ENCODE measurements at regions of chr7 and their contacts with region 1.

Region 1: DNA sequence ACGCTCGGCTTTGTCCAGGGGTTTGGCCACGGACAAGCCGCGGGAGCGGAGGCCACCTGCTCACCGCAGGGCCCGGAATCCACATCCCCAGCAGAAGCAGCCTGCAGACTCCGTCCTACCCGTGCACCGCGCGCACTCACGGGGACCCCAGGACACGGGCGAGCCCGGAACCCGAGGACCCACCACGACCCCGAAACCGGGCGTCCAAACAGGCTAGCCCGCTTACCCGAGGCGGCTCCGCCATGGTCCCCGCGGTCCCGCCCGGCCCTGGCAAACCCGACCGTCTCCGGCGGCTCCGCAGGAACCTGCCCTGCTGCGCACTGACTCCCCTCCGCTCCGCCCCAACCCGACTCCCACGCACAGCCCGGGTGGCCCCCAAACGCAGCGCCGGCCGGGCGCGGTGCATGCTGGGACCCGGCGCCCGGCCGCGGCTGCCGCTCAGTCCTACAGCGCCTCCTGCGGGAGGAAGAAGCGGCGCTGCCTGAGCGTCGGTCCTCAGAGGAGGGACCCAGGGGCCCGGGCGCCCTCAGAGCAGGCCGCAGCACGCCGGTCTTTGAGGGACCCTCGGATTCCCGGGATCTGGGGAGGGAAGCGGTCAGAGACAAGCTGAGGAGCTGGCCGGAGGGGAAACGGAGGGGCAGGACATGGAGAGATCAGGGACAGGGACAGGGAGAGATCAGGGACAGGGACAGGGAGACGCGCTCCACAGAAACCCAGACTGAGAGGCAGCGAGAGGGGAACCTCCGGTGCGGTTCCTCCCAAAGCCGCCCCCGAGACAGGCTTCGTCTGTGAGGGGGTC is at the start of gene ZNF786:
- DNase-seq: peak; percentile 95
- ATAC-seq: peak; percentile 86
- H3K4me3 ChIP-seq: peak within 1 kb of the TSS; percentile 72 to 96 (median 80)
- H3K4me3 Mint-ChIP-seq: peak within 1 kb of the TSS; percentile 95
- H3K27ac ChIP-seq: peak within 1 kb of the TSS; percentile 90 to 93
- H3K27ac Mint-ChIP-seq: peak within 1 kb of the TSS; percentile 99
- H3K4me1 ChIP-seq: peaks cover 0 to 20% of the 10 kb centered on the region in 2 donors
- H3K4me1 Mint-ChIP-seq: peaks cover 28% of the 10 kb centered on the region
- H3K27me3 ChIP-seq: no peaks in the 10 kb centered on the region
- H3K27me3 Mint-ChIP-seq: no peaks in the 10 kb centered on the region
- CTCF ChIP-seq: peak; percentile 86
- total RNA-seq, gene ZNF786: 14.7 and 18.0 TPM in 2 replicates

Region 2: GRCh38 chr7:148503875-148504487 is 586.6 kb before region 1 on chr7:
- CTCF ChIA-PET with region 1: no interaction called
- POLR2A ChIA-PET with region 1: no interaction called
- intact Hi-C with region 1: loop called (anchors 10 kb)
- DNase-seq: peak; percentile 61
- ATAC-seq: no peak
- H3K4me3 ChIP-seq: no peak overlapping the region
- H3K4me3 Mint-ChIP-seq: no peak overlapping the region
- H3K27ac ChIP-seq: no peak overlapping the region
- H3K27ac Mint-ChIP-seq: no peak overlapping the region
- H3K4me1 ChIP-seq: peaks cover 11 to 23% of the 10 kb centered on the region in 2 donors
- H3K4me1 Mint-ChIP-seq: peaks cover 47% of the 10 kb centered on the region
- H3K27me3 ChIP-seq: no peaks in the 10 kb centered on the region
- H3K27me3 Mint-ChIP-seq: no peaks in the 10 kb centered on the region
- CTCF ChIP-seq: peak; percentile 97

Region 3: GRCh38 chr7:148884299-148885022 is 206.1 kb before region 1 on chr7:
- CTCF ChIA-PET with region 1: no interaction called
- POLR2A ChIA-PET with region 1: interaction called, 6 read pairs
- intact Hi-C with region 1: loop called (anchors 1 kb)
- DNase-seq: peak; percentile 96
- ATAC-seq: peak; percentile 93
- H3K4me3 ChIP-seq: peak overlapping the region; percentile 17 to 81 (median 64)
- H3K4me3 Mint-ChIP-seq: peak overlapping the region; percentile 91
- H3K27ac ChIP-seq: peak overlapping the region; percentile 75 to 99
- H3K27ac Mint-ChIP-seq: peak overlapping the region; percentile 93
- H3K4me1 ChIP-seq: peaks cover 11 to 16% of the 10 kb centered on the region in 2 donors
- H3K4me1 Mint-ChIP-seq: peaks cover 14% of the 10 kb centered on the region
- H3K27me3 ChIP-seq: no peaks in the 10 kb centered on the region
- H3K27me3 Mint-ChIP-seq: no peaks in the 10 kb centered on the region
- CTCF ChIP-seq: no peak

Region 4: DNA sequence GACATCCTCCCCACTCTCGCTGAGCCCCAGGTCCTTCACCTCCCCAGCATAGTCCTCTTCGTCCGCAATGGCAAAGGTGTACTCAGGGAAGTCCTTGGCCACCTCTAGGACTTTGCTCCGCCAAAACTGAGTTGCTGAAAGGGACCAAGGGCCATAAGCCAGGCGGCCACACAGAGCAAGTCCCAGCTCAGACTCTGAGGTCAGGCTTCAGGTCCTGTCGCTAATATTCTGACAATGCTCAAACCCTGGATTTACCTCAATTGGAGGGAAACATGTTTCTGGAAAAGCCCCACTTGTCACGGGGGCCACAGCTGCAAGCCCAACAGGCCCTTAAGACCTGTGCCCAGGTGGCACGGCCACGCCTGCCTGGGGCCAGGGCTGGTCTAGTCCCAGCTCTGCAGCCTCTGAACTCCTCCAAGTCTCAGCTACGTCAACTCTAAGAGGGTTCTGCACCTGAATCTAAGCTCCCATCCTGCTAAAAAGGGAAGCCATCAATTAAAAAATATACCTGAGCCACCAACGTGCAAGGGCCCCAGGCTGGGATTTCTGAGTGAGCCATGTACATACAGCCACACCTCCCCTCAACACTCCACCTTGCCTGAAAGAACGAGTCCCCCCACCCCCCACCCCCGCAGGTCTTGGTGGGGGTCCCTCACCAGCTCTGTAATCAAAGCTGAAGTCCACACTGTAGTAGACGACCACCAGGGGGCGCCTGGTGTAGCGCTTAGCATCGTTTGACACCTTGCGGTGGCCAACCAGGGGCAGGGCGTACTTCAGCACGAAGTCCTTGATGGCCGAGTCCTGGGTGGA is 85.2 kb before region 1 on chr7:
- CTCF ChIA-PET with region 1: interaction called, 9 read pairs
- POLR2A ChIA-PET with region 1: interaction called, 6 read pairs
- intact Hi-C with region 1: loop called (anchors 1 kb)
- DNase-seq: peak; percentile 86
- ATAC-seq: peak; percentile 93
- H3K4me3 ChIP-seq: no peak overlapping the region
- H3K4me3 Mint-ChIP-seq: no peak overlapping the region
- H3K27ac ChIP-seq: no peak overlapping the region
- H3K27ac Mint-ChIP-seq: no peak overlapping the region
- H3K4me1 ChIP-seq: peaks cover 0 to 7% of the 10 kb centered on the region in 2 donors
- H3K4me1 Mint-ChIP-seq: peaks cover 4% of the 10 kb centered on the region
- H3K27me3 ChIP-seq: no peaks in the 10 kb centered on the region
- H3K27me3 Mint-ChIP-seq: no peaks in the 10 kb centered on the region
- CTCF ChIP-seq: peak; percentile 90

Region 5: DNA sequence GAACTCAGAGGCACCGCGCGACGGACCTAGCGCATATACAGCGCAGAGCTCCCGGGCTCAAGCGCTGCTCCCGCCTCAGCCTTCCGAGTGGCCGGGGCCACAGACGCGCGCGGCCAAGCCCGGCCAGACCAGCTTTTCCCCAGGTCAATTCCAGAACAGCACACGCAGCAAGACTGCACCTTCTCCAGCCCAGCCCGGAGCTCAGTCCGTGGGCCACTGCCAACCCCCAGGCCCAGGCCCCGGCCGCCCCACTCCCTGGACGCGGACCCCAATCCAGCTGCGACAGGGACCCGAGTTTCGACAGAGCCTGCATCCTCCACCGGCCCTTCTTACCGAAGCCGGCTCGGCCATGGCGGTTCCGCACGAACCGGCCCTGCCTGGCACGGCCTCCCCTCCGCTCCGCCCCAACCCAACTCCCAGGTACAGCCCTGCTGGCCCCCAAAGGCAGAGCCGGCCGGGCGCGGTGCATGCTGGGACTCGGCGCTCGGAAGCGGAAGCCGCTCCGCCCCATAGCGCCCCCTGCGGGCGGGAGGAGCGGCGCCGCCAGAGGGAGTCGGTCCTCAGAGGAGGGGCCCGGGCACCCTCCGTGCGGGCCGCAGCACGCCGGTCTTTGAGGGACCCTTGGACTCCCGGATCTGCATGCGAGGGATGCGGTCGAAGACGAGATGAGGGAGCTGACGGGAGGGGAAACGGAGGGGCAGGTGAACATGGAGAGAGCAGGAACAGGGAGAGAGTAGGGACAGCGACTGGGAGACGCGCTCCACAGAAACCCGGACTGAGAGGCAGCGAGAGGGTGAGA is 35.5 kb after region 1 on chr7 and contains the start of gene ZNF425:
- CTCF ChIA-PET with region 1: interaction called, 5 read pairs
- POLR2A ChIA-PET with region 1: interaction called, 6 read pairs
- intact Hi-C with region 1: loop called (anchors 1 kb)
- DNase-seq: peak; percentile 95
- ATAC-seq: peak; percentile 84
- H3K4me3 ChIP-seq: peak within 1 kb of the TSS; percentile 64 to 98 (median 88)
- H3K4me3 Mint-ChIP-seq: peak within 1 kb of the TSS; percentile 97
- H3K27ac ChIP-seq: peak within 1 kb of the TSS; percentile 85 to 89
- H3K27ac Mint-ChIP-seq: peak within 1 kb of the TSS; percentile 99
- H3K4me1 ChIP-seq: peaks cover 12 to 14% of the 10 kb centered on the region in 2 donors
- H3K4me1 Mint-ChIP-seq: peaks cover 22% of the 10 kb centered on the region
- H3K27me3 ChIP-seq: no peaks in the 10 kb centered on the region
- H3K27me3 Mint-ChIP-seq: no peaks in the 10 kb centered on the region
- CTCF ChIP-seq: peak; percentile 89
- total RNA-seq, gene ZNF425: 2.8 and 3.3 TPM in 2 replicates

Region 6: GRCh38 chr7:149239345-149240191 is 149.0 kb after region 1 on chr7 and contains the start of gene ZNF212:
- CTCF ChIA-PET with region 1: no interaction called
- POLR2A ChIA-PET with region 1: no interaction called
- intact Hi-C with region 1: loop called (anchors 2 kb)
- DNase-seq: peak; percentile 91
- ATAC-seq: peak; percentile 100
- H3K4me3 ChIP-seq: peak within 1 kb of the TSS; percentile 75 to 94 (median 84)
- H3K4me3 Mint-ChIP-seq: peak within 1 kb of the TSS; percentile 95
- H3K27ac ChIP-seq: peak within 1 kb of the TSS; percentile 33 to 73
- H3K27ac Mint-ChIP-seq: peak within 1 kb of the TSS; percentile 93
- H3K4me1 ChIP-seq: peaks cover 17 to 25% of the 10 kb centered on the region in 2 donors
- H3K4me1 Mint-ChIP-seq: peaks cover 28% of the 10 kb centered on the region
- H3K27me3 ChIP-seq: peaks cover 0 to 5% (median 0%) of the 10 kb centered on the region in 4 experiments
- H3K27me3 Mint-ChIP-seq: peaks cover 3% of the 10 kb centered on the region
- CTCF ChIP-seq: peak; percentile 84
- total RNA-seq, gene ZNF212: 22.5 and 25.7 TPM in 2 replicates

Region 7: GRCh38 chr7:149474309-149475114 is 383.9 kb after region 1 on chr7:
- CTCF ChIA-PET with region 1: no interaction called
- POLR2A ChIA-PET with region 1: no interaction called
- intact Hi-C with region 1: no loop called
- DNase-seq: no peak
- ATAC-seq: no peak
- H3K4me3 ChIP-seq: no peak overlapping the region
- H3K4me3 Mint-ChIP-seq: no peak overlapping the region
- H3K27ac ChIP-seq: no peak overlapping the region
- H3K27ac Mint-ChIP-seq: no peak overlapping the region
- H3K4me1 ChIP-seq: no peaks in the 10 kb centered on the region
- H3K4me1 Mint-ChIP-seq: no peaks in the 10 kb centered on the region
- H3K27me3 ChIP-seq: no peaks in the 10 kb centered on the region
- H3K27me3 Mint-ChIP-seq: no peaks in the 10 kb centered on the region
- CTCF ChIP-seq: no peak